ENCODE measurements at regions of chr14 and their contacts with region 1.

Region 1: GRCh38 chr14:64891839-64892375 is 12.2 kb upstream of the SPTB start:
- DNase-seq: peak; percentile 44
- H3K4me3 ChIP-seq: no peak overlapping the region
- H3K27ac ChIP-seq: no peak overlapping the region
- H3K4me1 ChIP-seq: no peaks in the 10 kb centered on the region
- H3K27me3 ChIP-seq: no peaks in the 10 kb centered on the region
- CTCF ChIP-seq: peak in 3 of 4 experiments; percentile 52 to 77 (median 73)
- POLR2A ChIP-seq: no peak

Region 2: GRCh38 chr14:64012720-64013119 is 879.2 kb before region 1 on chr14:
- intact Hi-C with region 1: no loop called
- DNase-seq: no peak
- H3K4me3 ChIP-seq: no peak overlapping the region
- H3K27ac ChIP-seq: no peak overlapping the region
- H3K4me1 ChIP-seq: no peaks in the 10 kb centered on the region
- H3K27me3 ChIP-seq: no peaks in the 10 kb centered on the region
- CTCF ChIP-seq: no peak
- POLR2A ChIP-seq: no peak

Region 3: GRCh38 chr14:64614805-64615391 is 277.0 kb before region 1 on chr14:
- intact Hi-C with region 1: no loop called
- DNase-seq: no peak
- H3K4me3 ChIP-seq: no peak overlapping the region
- H3K27ac ChIP-seq: no peak overlapping the region
- H3K4me1 ChIP-seq: no peaks in the 10 kb centered on the region
- H3K27me3 ChIP-seq: no peaks in the 10 kb centered on the region
- CTCF ChIP-seq: no peak
- POLR2A ChIP-seq: no peak

Region 4: GRCh38 chr14:64823305-64823861 is 68.5 kb before region 1 on chr14:
- intact Hi-C with region 1: loop called (anchors 5 kb)
- DNase-seq: peak; percentile 63
- H3K4me3 ChIP-seq: no peak overlapping the region
- H3K27ac ChIP-seq: no peak overlapping the region
- H3K4me1 ChIP-seq: no peaks in the 10 kb centered on the region
- H3K27me3 ChIP-seq: no peaks in the 10 kb centered on the region
- CTCF ChIP-seq: peak; percentile 49 to 91 (median 68)
- POLR2A ChIP-seq: no peak